CD8-positive, alpha-beta T cell (primary cell): ENCODE measurements at regions of chr10 and their contacts with region 1.

Region 1: GRCh38 chr10:52040486-52040885 is 273.6 kb upstream of the DKK1 start:
- DNase-seq: no peak
- ATAC-seq: no peak
- H3K4me3 ChIP-seq: no peak overlapping the region
- H3K4me3 Mint-ChIP-seq: no peak overlapping the region
- H3K27ac ChIP-seq: no peak overlapping the region
- H3K27ac Mint-ChIP-seq: no peak overlapping the region
- H3K4me1 ChIP-seq: no peaks in the 10 kb centered on the region
- H3K4me1 Mint-ChIP-seq: no peaks in the 10 kb centered on the region
- H3K27me3 ChIP-seq: no peaks in the 10 kb centered on the region
- H3K27me3 Mint-ChIP-seq: no peaks in the 10 kb centered on the region
- CTCF ChIP-seq: no peak

Region 2: GRCh38 chr10:50511492-50512213 is 1528.8 kb before region 1 on chr10:
- CTCF ChIA-PET with region 1: no interaction called
- POLR2A ChIA-PET with region 1: no interaction called
- intact Hi-C with region 1: no loop called
- DNase-seq: peak in 1 of 9 experiments; percentile 19
- ATAC-seq: peak; percentile 22
- H3K4me3 ChIP-seq: no peak overlapping the region
- H3K4me3 Mint-ChIP-seq: no peak overlapping the region
- H3K27ac ChIP-seq: no peak overlapping the region
- H3K27ac Mint-ChIP-seq: peak overlapping the region; percentile 71
- H3K4me1 ChIP-seq: peaks cover 34% of the 10 kb centered on the region
- H3K4me1 Mint-ChIP-seq: peaks cover 74% of the 10 kb centered on the region
- H3K27me3 ChIP-seq: no peaks in the 10 kb centered on the region
- H3K27me3 Mint-ChIP-seq: no peaks in the 10 kb centered on the region
- CTCF ChIP-seq: no peak

Region 3: DNA sequence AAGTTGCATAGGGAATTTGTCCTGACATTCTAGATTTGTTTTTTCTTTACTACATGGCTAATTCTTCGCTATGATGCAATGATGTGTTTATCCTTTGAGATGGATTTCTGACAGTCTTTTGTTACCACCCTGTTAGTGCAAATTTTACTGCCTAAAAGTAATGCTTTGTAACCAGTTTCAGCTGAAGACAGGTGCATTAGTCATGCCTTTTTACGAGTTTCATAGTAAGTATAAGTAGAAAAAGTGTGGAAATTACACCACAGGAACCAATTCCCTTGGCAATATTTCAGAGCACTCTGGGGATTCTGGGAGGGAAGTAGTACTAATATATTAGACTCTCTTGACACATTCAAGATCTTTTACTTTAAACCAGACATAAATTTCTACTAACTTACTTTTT is 15.8 kb after region 1 on chr10:
- CTCF ChIA-PET with region 1: no interaction called
- POLR2A ChIA-PET with region 1: no interaction called
- intact Hi-C with region 1: loop called in 1 of 2 experiments (anchors 1 kb)
- DNase-seq: no peak
- ATAC-seq: no peak
- H3K4me3 ChIP-seq: no peak overlapping the region
- H3K4me3 Mint-ChIP-seq: no peak overlapping the region
- H3K27ac ChIP-seq: no peak overlapping the region
- H3K27ac Mint-ChIP-seq: no peak overlapping the region
- H3K4me1 ChIP-seq: no peaks in the 10 kb centered on the region
- H3K4me1 Mint-ChIP-seq: no peaks in the 10 kb centered on the region
- H3K27me3 ChIP-seq: no peaks in the 10 kb centered on the region
- H3K27me3 Mint-ChIP-seq: no peaks in the 10 kb centered on the region
- CTCF ChIP-seq: no peak

Region 4: DNA sequence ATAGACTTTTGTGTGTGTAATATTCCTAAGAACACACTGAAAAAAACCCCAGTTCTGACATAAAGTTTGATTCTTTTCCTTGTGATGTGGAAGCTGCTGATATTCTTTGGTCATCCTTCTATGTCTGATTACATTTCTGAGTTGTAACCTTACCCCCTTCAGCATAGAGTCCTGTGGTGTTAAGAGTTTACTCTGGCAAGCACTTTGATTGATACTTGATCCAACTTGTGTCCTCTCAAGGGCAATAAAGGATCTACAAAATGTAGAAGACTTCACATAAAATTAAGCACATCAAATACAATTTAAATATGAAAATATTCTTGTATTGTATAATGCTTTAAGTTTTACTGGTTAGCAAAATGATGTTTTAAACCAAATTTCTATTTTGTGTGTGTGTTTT is 51.9 kb after region 1 on chr10:
- CTCF ChIA-PET with region 1: no interaction called
- POLR2A ChIA-PET with region 1: no interaction called
- intact Hi-C with region 1: no loop called
- DNase-seq: no peak
- ATAC-seq: no peak
- H3K4me3 ChIP-seq: no peak overlapping the region
- H3K4me3 Mint-ChIP-seq: no peak overlapping the region
- H3K27ac ChIP-seq: no peak overlapping the region
- H3K27ac Mint-ChIP-seq: no peak overlapping the region
- H3K4me1 ChIP-seq: no peaks in the 10 kb centered on the region
- H3K4me1 Mint-ChIP-seq: no peaks in the 10 kb centered on the region
- H3K27me3 ChIP-seq: no peaks in the 10 kb centered on the region
- H3K27me3 Mint-ChIP-seq: no peaks in the 10 kb centered on the region
- CTCF ChIP-seq: no peak